CD4-positive, alpha-beta T cell (primary cell): ENCODE measurements at regions of chr5 and their contacts with region 1.

Region 1: GRCh38 chr5:180784497-180785097 is 18.0 kb downstream of the MGAT1 start:
- DNase-seq: peak; percentile 59 to 86 (median 74)
- ATAC-seq: peak; percentile 90
- H3K4me3 ChIP-seq: no peak overlapping the region
- H3K4me3 Mint-ChIP-seq: no peak overlapping the region
- H3K27ac ChIP-seq: no peak overlapping the region
- H3K27ac Mint-ChIP-seq: peak overlapping the region; percentile 85
- H3K4me1 ChIP-seq: peaks cover 31% of the 10 kb centered on the region
- H3K4me1 Mint-ChIP-seq: peaks cover 45% of the 10 kb centered on the region
- H3K27me3 ChIP-seq: no peaks in the 10 kb centered on the region
- H3K27me3 Mint-ChIP-seq: no peaks in the 10 kb centered on the region
- CTCF ChIP-seq: peak; percentile 69

Region 2: GRCh38 chr5:180739271-180739670 is 45.3 kb before region 1 on chr5:
- CTCF ChIA-PET with region 1: no interaction called
- POLR2A ChIA-PET with region 1: no interaction called
- intact Hi-C with region 1: no loop called
- DNase-seq: no peak
- ATAC-seq: no peak
- H3K4me3 ChIP-seq: no peak overlapping the region
- H3K4me3 Mint-ChIP-seq: no peak overlapping the region
- H3K27ac ChIP-seq: no peak overlapping the region
- H3K27ac Mint-ChIP-seq: no peak overlapping the region
- H3K4me1 ChIP-seq: no peaks in the 10 kb centered on the region
- H3K4me1 Mint-ChIP-seq: no peaks in the 10 kb centered on the region
- H3K27me3 ChIP-seq: peaks cover 12% of the 10 kb centered on the region in 2 experiments
- H3K27me3 Mint-ChIP-seq: peaks cover 45% of the 10 kb centered on the region
- CTCF ChIP-seq: no peak

Region 3: GRCh38 chr5:180868960-180869359 is 84.4 kb after region 1 on chr5:
- CTCF ChIA-PET with region 1: interaction called, 13 read pairs
- POLR2A ChIA-PET with region 1: interaction called, 4 read pairs
- intact Hi-C with region 1: loop called (anchors 5 kb)
- DNase-seq: peak; percentile 19 to 77 (median 52)
- ATAC-seq: peak; percentile 48
- H3K4me3 ChIP-seq: no peak overlapping the region
- H3K4me3 Mint-ChIP-seq: no peak overlapping the region
- H3K27ac ChIP-seq: no peak overlapping the region
- H3K27ac Mint-ChIP-seq: no peak overlapping the region
- H3K4me1 ChIP-seq: peaks cover 7% of the 10 kb centered on the region
- H3K4me1 Mint-ChIP-seq: no peaks in the 10 kb centered on the region
- H3K27me3 ChIP-seq: no peaks in the 10 kb centered on the region
- H3K27me3 Mint-ChIP-seq: peaks cover 26% of the 10 kb centered on the region
- CTCF ChIP-seq: peak; percentile 72